ENCODE measurements at regions of chr20 and their contacts with region 1.

Region 1: GRCh38 chr20:49832632-49833327 is 20.2 kb downstream of the SLC9A8 start:
- DNase-seq: no peak
- ATAC-seq: no peak
- H3K4me3 ChIP-seq: no peak overlapping the region
- H3K4me3 Mint-ChIP-seq: no peak overlapping the region
- H3K27ac ChIP-seq: no peak overlapping the region
- H3K27ac Mint-ChIP-seq: no peak overlapping the region
- H3K4me1 ChIP-seq: no peaks in the 10 kb centered on the region
- H3K4me1 Mint-ChIP-seq: peaks cover 3 to 10% (median 9%) of the 10 kb centered on the region in 3 donors
- H3K27me3 ChIP-seq: no peaks in the 10 kb centered on the region
- H3K27me3 Mint-ChIP-seq: no peaks in the 10 kb centered on the region

Region 2: GRCh38 chr20:49046087-49046900 is 786.5 kb before region 1 on chr20 and contains the start of gene CSE1L:
- CTCF ChIA-PET with region 1: no interaction called
- POLR2A ChIA-PET with region 1: interaction called in 1 of 2 experiments, 12 read pairs
- DNase-seq: peak; percentile 85 to 96 (median 92)
- ATAC-seq: peak; percentile 90 to 92 (median 92)
- H3K4me3 ChIP-seq: peak within 1 kb of the TSS; percentile 85 to 100
- H3K4me3 Mint-ChIP-seq: peak within 1 kb of the TSS; percentile 94 to 97 (median 97)
- H3K27ac ChIP-seq: peak within 1 kb of the TSS; percentile 97
- H3K27ac Mint-ChIP-seq: peak within 1 kb of the TSS; percentile 96 to 99
- H3K4me1 ChIP-seq: peaks cover 16 to 29% of the 10 kb centered on the region in 2 experiments
- H3K4me1 Mint-ChIP-seq: peaks cover 42 to 49% (median 43%) of the 10 kb centered on the region in 3 donors
- H3K27me3 ChIP-seq: no peaks in the 10 kb centered on the region
- H3K27me3 Mint-ChIP-seq: no peaks in the 10 kb centered on the region
- total RNA-seq, gene CSE1L: 29.3 to 41.7 (median 37.4) TPM

Region 3: GRCh38 chr20:49766979-49767521 is 65.7 kb before region 1 on chr20:
- CTCF ChIA-PET with region 1: no interaction called
- POLR2A ChIA-PET with region 1: no interaction called
- DNase-seq: no peak
- ATAC-seq: no peak
- H3K4me3 ChIP-seq: no peak overlapping the region
- H3K4me3 Mint-ChIP-seq: peak overlapping the region in 1 of 3 donors; percentile 31
- H3K27ac ChIP-seq: no peak overlapping the region
- H3K27ac Mint-ChIP-seq: no peak overlapping the region
- H3K4me1 ChIP-seq: peaks cover 13 to 28% of the 10 kb centered on the region in 2 experiments
- H3K4me1 Mint-ChIP-seq: peaks cover 20 to 34% (median 29%) of the 10 kb centered on the region in 3 donors
- H3K27me3 ChIP-seq: peaks cover 4 to 26% of the 10 kb centered on the region in 2 experiments
- H3K27me3 Mint-ChIP-seq: peaks cover 45 to 71% of the 10 kb centered on the region in 2 donors

Region 4: DNA sequence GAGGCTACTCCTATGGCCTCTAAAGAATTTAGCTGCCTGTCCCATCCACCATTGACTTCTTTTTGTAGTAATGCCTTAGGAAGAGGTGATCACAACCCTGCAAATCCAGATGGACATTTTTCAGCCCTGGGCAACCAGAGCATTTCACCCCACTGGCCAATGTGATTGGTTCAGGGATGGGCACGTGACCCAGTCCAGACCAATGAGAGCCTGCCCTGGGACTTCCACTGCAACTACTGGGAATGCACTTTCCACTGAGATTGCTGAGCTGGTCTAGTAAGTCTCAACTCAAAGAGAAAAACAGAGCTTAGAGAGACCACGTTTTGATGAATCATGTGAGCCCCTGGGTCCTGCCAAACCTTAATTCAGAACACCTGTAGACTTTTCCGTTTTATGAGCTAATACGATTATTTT is 289.1 kb after region 1 on chr20:
- CTCF ChIA-PET with region 1: no interaction called
- POLR2A ChIA-PET with region 1: no interaction called
- DNase-seq: no peak
- ATAC-seq: no peak
- H3K4me3 ChIP-seq: no peak overlapping the region
- H3K4me3 Mint-ChIP-seq: no peak overlapping the region
- H3K27ac ChIP-seq: no peak overlapping the region
- H3K27ac Mint-ChIP-seq: peak overlapping the region in 1 of 2 donors; percentile 11
- H3K4me1 ChIP-seq: peaks cover 0 to 4% of the 10 kb centered on the region in 2 experiments
- H3K4me1 Mint-ChIP-seq: peaks cover 4 to 7% (median 5%) of the 10 kb centered on the region in 3 donors
- H3K27me3 ChIP-seq: no peaks in the 10 kb centered on the region
- H3K27me3 Mint-ChIP-seq: no peaks in the 10 kb centered on the region

Region 5: GRCh38 chr20:50292324-50293243 is 459.8 kb after region 1 on chr20:
- CTCF ChIA-PET with region 1: no interaction called
- POLR2A ChIA-PET with region 1: no interaction called
- DNase-seq: peak in 6 of 35 experiments; percentile 17 to 43 (median 22)
- ATAC-seq: no peak
- H3K4me3 ChIP-seq: no peak overlapping the region
- H3K4me3 Mint-ChIP-seq: no peak overlapping the region
- H3K27ac ChIP-seq: no peak overlapping the region
- H3K27ac Mint-ChIP-seq: no peak overlapping the region
- H3K4me1 ChIP-seq: peaks cover 4 to 5% of the 10 kb centered on the region in 2 experiments
- H3K4me1 Mint-ChIP-seq: peaks cover 1 to 6% (median 5%) of the 10 kb centered on the region in 3 donors
- H3K27me3 ChIP-seq: peaks cover 0 to 31% of the 10 kb centered on the region in 2 experiments
- H3K27me3 Mint-ChIP-seq: peaks cover 4 to 10% of the 10 kb centered on the region in 2 donors